Left lung (tissue), 14 donors: ENCODE measurements at regions of chr7 and their contacts with region 1.

Region 1: DNA sequence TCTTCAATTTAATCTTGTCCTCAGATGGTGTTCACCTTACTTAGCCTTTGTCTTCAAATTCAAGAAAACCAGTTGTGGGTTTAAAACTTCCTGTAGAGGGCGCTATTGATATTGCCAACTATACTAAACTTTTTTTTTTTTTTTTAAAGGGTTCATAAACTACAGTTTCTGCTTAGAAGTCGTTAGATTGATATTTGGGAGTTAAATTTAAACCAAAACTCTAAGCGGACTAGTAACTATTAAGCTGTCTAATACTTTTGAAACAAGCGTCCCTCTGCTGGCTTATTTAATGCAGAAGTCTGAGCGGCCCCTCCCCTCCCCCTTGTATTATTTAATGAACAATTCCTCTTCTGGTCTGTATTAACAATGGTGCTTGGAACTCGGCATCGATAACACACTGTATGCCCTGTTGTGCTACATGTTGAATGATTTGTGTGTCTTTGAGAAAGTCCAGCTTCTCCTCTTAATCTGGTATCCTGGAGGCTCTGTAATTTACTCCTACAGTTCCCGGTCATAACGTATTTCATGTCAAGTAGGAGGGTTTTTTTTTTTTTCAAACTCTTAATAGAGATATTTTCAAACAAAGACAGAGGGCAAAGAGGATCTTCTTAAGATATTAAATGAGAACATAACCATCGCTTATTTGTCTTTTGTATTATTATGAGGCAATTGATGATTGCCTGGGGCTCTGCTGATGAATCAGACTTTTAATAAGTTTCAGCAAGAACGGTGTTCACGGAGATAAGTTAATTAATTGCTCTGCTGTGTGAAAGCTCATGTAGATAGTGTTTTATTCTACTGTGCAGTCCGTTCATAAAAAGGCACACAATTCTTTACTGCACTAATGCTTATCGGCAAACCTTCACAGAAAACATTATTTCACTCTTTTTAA is 22.6 kb upstream of the CREB5 start:
- DNase-seq: peak in 2 of 4 donors; percentile 65 to 75
- ATAC-seq: peak; percentile 75
- H3K4me3 ChIP-seq: peak overlapping the region in 1 of 2 donors; percentile 5
- H3K27ac ChIP-seq: no peak overlapping the region
- H3K4me1 ChIP-seq: no peaks in the 10 kb centered on the region
- H3K27me3 ChIP-seq: peaks cover 0 to 9% of the 10 kb centered on the region in 2 donors
- CTCF ChIP-seq: peak; percentile 59 to 78

Region 2: DNA sequence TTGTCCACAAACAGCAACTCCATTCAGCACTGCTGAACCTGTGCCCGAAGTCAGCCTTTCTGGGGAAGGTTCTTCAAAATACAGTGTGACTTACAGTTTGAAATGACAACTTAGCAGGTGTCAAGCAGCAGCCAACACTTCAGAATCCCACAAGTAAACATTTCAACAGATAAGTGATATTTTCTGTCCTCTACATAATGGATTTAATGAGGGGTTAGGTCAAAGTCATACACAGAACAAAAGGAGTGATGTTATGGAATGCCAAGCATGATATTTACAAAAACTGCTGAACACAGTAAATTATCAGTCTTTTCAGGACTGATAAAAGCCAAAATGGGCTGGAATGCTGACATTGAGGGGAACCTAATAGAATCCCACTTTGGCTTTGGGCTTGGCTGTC is 131.5 kb before region 1 on chr7:
- intact Hi-C with region 1: no loop called
- DNase-seq: no peak
- ATAC-seq: no peak
- H3K4me3 ChIP-seq: no peak overlapping the region
- H3K27ac ChIP-seq: no peak overlapping the region
- H3K4me1 ChIP-seq: no peaks in the 10 kb centered on the region
- H3K27me3 ChIP-seq: peaks cover 0 to 5% of the 10 kb centered on the region in 2 donors
- CTCF ChIP-seq: no peak

Region 3: DNA sequence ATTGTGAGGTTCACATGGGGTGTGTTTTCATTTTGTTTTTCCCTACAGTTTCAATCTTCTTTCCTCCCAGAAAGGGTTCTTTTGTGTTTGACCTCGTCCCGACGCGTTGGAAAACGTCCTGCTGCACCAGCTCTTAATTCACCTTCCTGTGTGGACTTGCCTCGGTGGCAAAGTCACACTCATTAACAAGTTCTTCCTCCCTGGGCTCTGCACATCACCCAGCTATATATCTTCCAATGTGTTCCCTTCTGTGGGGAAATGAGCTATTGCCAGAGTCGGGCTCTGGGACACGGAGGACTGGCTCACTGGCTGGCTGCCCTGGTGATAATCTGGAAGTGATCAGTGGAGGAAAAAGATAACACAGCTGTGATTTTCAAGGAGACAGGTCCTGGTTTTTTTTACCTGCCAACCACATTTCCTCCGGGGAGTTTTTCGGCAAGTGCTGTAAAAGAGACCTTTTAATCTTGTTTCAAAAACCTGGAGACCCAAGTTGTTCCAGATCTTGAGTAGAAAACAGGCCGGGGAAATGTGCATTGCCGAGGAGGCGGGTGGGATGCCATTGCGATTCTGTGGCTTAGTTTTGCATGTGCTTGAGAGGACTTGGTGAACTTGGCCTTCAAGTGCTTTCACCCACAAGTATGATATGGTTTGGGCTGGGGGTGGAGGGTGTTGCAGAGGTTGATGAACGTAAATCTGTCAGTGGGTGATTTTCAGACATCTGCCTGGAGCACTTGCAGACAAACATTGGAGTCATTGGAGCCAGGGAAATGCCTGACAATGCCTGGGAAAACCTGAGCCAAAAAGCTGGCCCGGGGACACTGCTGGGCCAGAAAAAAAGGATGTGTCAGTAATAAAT is 74.0 kb before region 1 on chr7:
- intact Hi-C with region 1: no loop called
- DNase-seq: no peak
- ATAC-seq: no peak
- H3K4me3 ChIP-seq: no peak overlapping the region
- H3K27ac ChIP-seq: no peak overlapping the region
- H3K4me1 ChIP-seq: no peaks in the 10 kb centered on the region
- H3K27me3 ChIP-seq: peaks cover 9 to 66% of the 10 kb centered on the region in 2 donors
- CTCF ChIP-seq: no peak

Region 4: GRCh38 chr7:28626624-28627262 is 237.0 kb after region 1 on chr7:
- intact Hi-C with region 1: loop called in 1 of 2 experiments (anchors 10 kb)
- DNase-seq: no peak
- ATAC-seq: peak; percentile 78
- H3K4me3 ChIP-seq: no peak overlapping the region
- H3K27ac ChIP-seq: no peak overlapping the region
- H3K4me1 ChIP-seq: peaks cover 3 to 6% of the 10 kb centered on the region in 2 donors
- H3K27me3 ChIP-seq: peaks cover 0 to 8% of the 10 kb centered on the region in 2 donors
- CTCF ChIP-seq: peak; percentile 48 to 66

Region 5: DNA sequence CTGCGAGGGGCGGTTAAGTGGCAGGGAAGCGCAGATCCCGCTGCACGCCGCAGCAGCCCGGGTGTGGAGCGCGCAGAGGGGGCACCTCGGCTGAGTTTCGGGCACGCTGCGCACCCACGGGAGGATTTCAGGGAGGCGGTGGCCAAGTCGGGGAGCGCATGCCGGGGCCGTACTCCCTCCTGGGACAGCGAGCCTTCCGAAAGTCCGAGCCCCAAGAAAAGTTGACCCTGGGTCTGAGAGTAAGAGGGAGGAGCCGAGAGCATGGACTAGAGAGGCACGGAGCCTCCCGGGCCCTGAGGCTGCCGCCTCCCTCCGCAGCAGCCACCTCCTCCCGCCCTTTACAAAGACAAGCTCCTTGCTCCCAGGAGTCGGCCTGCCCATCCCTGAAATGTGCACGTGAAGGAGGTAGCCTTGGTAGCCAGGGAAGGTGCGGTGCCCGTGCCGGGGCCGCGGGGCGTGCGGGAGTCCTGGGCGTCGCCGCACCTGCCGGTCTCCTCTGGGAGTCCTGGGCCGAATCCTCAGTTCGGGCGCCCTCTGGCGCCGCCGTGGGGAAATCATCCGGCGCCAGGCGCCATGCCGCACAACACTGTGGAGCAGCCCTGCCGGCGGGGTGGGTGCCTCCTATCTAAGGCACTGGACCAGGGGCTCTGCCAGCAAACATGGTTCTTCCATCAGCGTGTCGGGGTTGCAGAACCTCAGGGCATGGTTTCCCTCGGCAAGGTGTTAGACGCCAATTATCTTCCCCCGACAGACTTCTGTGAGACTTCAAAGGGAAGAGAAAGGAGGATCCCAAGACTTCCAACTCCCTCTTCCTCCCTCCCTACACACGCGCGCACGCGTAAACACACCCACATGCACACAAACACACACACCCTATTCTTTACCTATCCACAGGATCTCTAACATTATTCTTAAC is 464.3 kb after region 1 on chr7:
- intact Hi-C with region 1: loop called in 1 of 2 experiments (anchors 10 kb)
- DNase-seq: peak; percentile 78 to 97 (median 82)
- ATAC-seq: peak; percentile 100
- H3K4me3 ChIP-seq: peak overlapping the region; percentile 36 to 43
- H3K27ac ChIP-seq: no peak overlapping the region
- H3K4me1 ChIP-seq: peaks cover 4 to 15% of the 10 kb centered on the region in 2 donors
- H3K27me3 ChIP-seq: peaks cover 21 to 84% of the 10 kb centered on the region in 2 donors
- CTCF ChIP-seq: peak; percentile 79 to 94